SK-N-SH (cell line): ENCODE measurements at regions of chr1 and their contacts with region 1.

Region 1: DNA sequence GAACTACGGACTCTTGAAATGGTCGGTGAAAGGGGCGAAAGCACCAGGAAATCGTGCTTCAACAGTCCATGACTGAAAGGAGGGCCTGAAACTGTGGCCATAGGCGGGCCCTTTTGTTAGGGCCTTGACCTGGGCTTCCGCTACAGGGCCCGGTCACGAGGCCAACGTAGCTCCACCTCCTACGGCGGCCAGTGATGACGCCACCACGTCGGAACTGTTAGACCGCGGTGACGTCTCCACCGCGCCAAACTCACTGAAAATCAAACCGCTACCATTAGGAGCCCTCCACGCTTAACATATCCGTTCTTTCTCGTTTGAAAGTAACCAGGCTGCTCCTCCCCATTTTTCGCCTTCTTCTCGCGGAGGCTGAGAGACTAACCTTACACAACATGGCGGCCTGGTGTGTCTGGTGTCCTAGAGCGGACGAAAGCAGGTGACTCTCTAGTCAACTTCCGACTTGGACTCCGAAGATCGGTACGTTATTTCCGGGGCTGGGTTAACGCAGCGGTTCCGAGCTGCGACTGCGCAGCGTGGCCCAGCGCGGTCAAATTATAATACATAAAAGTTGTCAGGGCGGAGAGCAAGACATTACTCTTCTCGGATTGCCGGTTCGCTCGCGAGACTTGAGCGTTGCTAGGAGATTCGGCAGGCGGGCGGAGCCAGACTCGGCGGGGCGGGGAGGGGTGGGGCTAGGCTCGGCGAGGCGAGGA is 376 bp upstream of the CACYBP start:
- DNase-seq: peak; percentile 79
- H3K4me3 ChIP-seq: peak overlapping the region; percentile 91 to 100
- H3K27ac ChIP-seq: peak overlapping the region; percentile 98 to 100
- H3K4me1 ChIP-seq: peaks cover 0 to 9% of the 10 kb centered on the region in 2 experiments; a peak in 3 of 4 replicates
- H3K27me3 ChIP-seq: no peaks in the 10 kb centered on the region
- CTCF ChIP-seq: no peak
- EP300 ChIP-seq: no peak
- RAD21 ChIP-seq: no peak

Region 2: GRCh38 chr1:174769961-174770549 is 229.3 kb before region 1 on chr1:
- CTCF ChIA-PET with region 1: interaction called, 10 read pairs
- POLR2A ChIA-PET with region 1: interaction called, 4 read pairs
- DNase-seq: peak; percentile 45
- H3K4me3 ChIP-seq: peak overlapping the region in 1 of 2 experiments; percentile 10; a peak in 1 of 4 replicates
- H3K27ac ChIP-seq: no peak overlapping the region
- H3K4me1 ChIP-seq: no peaks in the 10 kb centered on the region
- H3K27me3 ChIP-seq: no peaks in the 10 kb centered on the region
- CTCF ChIP-seq: peak; percentile 92
- EP300 ChIP-seq: no peak
- RAD21 ChIP-seq: peak; percentile 92

Region 3: GRCh38 chr1:174800216-174800851 is 199.0 kb before region 1 on chr1:
- CTCF ChIA-PET with region 1: interaction called, 4 read pairs
- POLR2A ChIA-PET with region 1: interaction called, 15 read pairs
- DNase-seq: peak; percentile 43
- H3K4me3 ChIP-seq: peak overlapping the region; percentile 45 to 69
- H3K27ac ChIP-seq: peak overlapping the region; percentile 11 to 30; a peak in 2 of 4 replicates
- H3K4me1 ChIP-seq: peaks cover 3 to 6% of the 10 kb centered on the region in 2 experiments; a peak in 3 of 4 replicates
- H3K27me3 ChIP-seq: no peaks in the 10 kb centered on the region
- CTCF ChIP-seq: no peak
- EP300 ChIP-seq: no peak
- RAD21 ChIP-seq: no peak

Region 4: DNA sequence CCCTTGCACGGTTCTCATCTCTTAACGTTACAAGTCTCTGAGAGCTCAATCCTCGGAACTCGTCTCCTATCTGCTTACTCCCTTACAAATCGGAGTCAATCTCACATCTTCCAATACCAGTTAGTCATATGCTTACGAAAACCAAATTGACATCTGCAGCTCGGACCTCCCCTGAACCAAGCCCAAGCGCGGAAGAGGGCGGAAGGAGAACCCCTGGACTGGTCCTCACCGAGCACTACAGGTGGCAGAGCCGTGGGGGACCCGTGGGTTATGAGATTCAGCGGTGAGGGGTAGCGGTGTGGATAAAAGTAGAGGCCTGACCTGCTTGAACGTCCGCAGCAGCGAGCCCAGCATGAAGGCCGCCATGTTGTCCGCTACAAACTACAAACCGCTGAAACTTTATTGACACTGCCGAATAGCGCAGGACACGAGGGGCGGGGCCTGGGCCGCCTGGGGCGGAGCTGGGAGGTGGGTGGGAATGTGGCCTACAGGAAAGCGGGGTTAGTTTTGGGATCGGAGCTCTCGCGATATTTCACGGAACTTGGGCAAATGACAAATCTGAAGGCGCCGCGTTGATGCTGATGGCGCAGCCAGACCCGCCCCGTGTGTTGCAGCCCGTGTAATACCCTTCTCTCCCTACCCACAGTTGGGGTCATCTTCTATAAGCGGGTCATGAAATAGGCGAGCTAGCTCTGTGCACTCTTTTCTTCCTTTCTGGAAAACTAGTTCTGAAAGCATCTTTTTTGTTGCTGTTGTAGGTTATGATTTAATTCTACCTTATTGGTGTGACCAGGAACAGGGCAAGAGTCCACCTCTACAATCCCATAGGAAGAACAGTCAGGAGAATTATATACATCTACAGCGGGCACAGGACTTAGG is 23.9 kb after region 1 on chr1 and contains the start of gene MRPS14:
- CTCF ChIA-PET with region 1: interaction called, 3 read pairs
- POLR2A ChIA-PET with region 1: interaction called, 54 read pairs
- DNase-seq: peak; percentile 91
- H3K4me3 ChIP-seq: peak within 1 kb of the TSS; percentile 85 to 94
- H3K27ac ChIP-seq: peak within 1 kb of the TSS; percentile 76 to 85
- H3K4me1 ChIP-seq: peaks cover 0 to 9% of the 10 kb centered on the region in 2 experiments; a peak in 2 of 4 replicates
- H3K27me3 ChIP-seq: no peaks in the 10 kb centered on the region
- CTCF ChIP-seq: no peak
- EP300 ChIP-seq: peak in 1 of 2 experiments; percentile 22; a peak in 1 of 4 replicates
- RAD21 ChIP-seq: no peak
- polyA plus RNA-seq, gene MRPS14: 18.2 and 18.7 TPM in 2 replicates